ENCODE measurements at regions of chr5 and their contacts with region 1.

Region 1: DNA sequence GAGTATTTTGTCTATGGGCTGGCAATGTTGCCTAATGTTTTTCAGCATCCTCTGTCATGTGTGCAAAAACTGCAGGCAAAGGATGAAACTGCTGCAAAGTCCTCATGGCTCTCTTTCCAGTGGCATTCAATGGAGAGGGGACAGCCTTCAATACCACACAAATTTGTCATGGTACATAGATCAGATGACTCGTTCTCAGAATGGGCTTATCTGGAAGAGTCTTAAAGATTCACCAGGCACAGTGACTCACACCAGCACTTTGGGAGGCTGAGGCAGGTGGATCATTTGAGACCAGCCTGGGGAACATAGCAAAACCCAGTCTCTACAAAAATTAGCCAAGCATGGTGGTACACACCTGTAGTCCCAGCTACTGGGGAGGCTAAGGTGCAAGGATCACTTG is 5.3 kb downstream of the CDKN2AIPNL start:
- DNase-seq: no peak
- ATAC-seq: no peak
- H3K4me3 ChIP-seq: no peak overlapping the region
- H3K27ac ChIP-seq: no peak overlapping the region
- H3K4me1 ChIP-seq: peaks cover 11% of the 10 kb centered on the region
- H3K27me3 ChIP-seq: no peaks in the 10 kb centered on the region
- CTCF ChIP-seq: no peak

Region 2: DNA sequence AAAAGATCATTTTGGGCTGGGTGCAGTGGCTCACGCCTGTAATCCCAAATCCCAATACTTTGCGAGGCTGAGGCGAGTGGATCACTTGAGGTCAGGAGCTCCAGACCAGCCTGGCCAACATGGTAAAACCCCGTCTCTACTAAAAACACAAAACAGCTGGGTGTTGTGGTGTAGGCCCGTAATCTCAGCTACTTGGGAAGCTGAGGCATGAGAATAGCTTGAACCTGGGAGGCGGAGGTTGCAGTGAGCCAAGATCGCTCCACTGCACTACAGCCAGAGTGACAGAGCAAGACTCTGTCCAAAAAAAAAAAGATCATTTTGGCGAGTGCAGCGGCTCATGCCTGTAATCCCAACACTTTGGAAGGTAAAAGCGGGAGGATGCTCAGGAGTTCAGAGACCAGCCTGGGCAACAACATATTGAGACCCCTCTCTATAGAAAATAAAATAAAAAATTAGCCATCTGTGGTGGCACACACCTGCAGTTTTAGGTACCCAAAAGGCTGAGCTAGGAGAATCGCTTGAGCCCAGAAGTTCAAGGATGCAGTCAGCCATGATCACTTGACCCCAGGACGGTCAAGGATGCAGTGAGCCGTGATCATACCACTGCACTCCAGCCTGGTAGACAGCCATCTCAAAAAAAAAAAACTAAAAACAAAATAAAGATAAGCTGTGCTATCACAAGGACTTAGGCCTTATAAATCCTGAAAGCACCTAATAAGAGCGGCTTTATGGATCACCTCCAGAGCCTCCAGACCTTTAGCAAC is 196.7 kb before region 1 on chr5:
- intact Hi-C with region 1: no loop called
- DNase-seq: no peak
- ATAC-seq: no peak
- H3K4me3 ChIP-seq: no peak overlapping the region
- H3K27ac ChIP-seq: no peak overlapping the region
- H3K4me1 ChIP-seq: peaks cover 9% of the 10 kb centered on the region
- H3K27me3 ChIP-seq: no peaks in the 10 kb centered on the region
- CTCF ChIP-seq: no peak

Region 3: DNA sequence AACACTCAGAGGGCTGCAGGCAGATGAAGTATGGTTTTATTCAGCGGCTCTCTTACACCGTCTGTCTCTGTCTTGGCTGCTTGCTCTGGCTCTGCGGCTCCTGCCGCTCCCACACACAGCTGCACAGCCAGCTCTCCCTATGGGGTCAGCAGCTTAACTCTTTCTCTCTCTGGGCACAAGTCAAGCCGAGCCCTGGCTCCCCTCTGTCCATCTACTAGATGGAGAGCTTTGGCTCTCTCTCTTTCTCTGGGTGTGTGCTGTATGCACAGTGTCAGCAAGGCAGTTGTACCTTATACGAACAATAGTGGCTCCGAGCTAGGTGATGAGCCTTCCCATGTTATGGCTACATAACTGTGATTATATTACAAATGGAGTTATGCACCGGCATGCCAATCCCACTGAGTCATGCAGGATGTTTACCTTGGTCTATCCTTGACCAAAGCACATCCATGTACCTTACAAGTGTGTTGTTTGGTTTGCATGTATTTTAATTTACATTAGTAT is 161.2 kb before region 1 on chr5:
- intact Hi-C with region 1: no loop called
- DNase-seq: no peak
- ATAC-seq: no peak
- H3K4me3 ChIP-seq: no peak overlapping the region
- H3K27ac ChIP-seq: no peak overlapping the region
- H3K4me1 ChIP-seq: peaks cover 4% of the 10 kb centered on the region
- H3K27me3 ChIP-seq: no peaks in the 10 kb centered on the region
- CTCF ChIP-seq: no peak

Region 4: GRCh38 chr5:134533115-134533815 is 126.9 kb after region 1 on chr5:
- intact Hi-C with region 1: loop called (anchors 10 kb)
- DNase-seq: peak; percentile 79
- ATAC-seq: peak; percentile 81
- H3K4me3 ChIP-seq: no peak overlapping the region
- H3K27ac ChIP-seq: no peak overlapping the region
- H3K4me1 ChIP-seq: peaks cover 59% of the 10 kb centered on the region
- H3K27me3 ChIP-seq: no peaks in the 10 kb centered on the region
- CTCF ChIP-seq: no peak

Measured in upper lobe of right lung (tissue), 1 donor.